Vagina (tissue), 2 donors: ENCODE measurements at regions of chr5 and their contacts with region 1.

Region 1: GRCh38 chr5:54944364-54944763 is 41.0 kb downstream of the ESM1 start:
- DNase-seq: no peak
- H3K4me3 ChIP-seq: no peak overlapping the region
- H3K27ac ChIP-seq: no peak overlapping the region
- H3K4me1 ChIP-seq: no peaks in the 10 kb centered on the region
- H3K27me3 ChIP-seq: no peaks in the 10 kb centered on the region
- CTCF ChIP-seq: peak in 1 of 3 experiments; percentile 12
- POLR2A ChIP-seq: no peak

Region 2: GRCh38 chr5:55102348-55102747 is 158.0 kb after region 1 on chr5 and contains the start of gene GZMA:
- intact Hi-C with region 1: no loop called
- DNase-seq: no peak
- H3K4me3 ChIP-seq: no peak within 1 kb of the TSS
- H3K27ac ChIP-seq: no peak within 1 kb of the TSS
- H3K4me1 ChIP-seq: no peaks in the 10 kb centered on the region
- H3K27me3 ChIP-seq: no peaks in the 10 kb centered on the region
- CTCF ChIP-seq: no peak
- POLR2A ChIP-seq: no peak
- total RNA-seq, gene GZMA: 1.2 TPM

Region 3: GRCh38 chr5:55159763-55160492 is 215.6 kb after region 1 on chr5 and contains the start of gene GPX8:
- intact Hi-C with region 1: loop called (anchors 10 kb)
- DNase-seq: no peak
- H3K4me3 ChIP-seq: peak within 1 kb of the TSS; percentile 43 to 45
- H3K27ac ChIP-seq: peak within 1 kb of the TSS; percentile 76
- H3K4me1 ChIP-seq: peaks cover 7% of the 10 kb centered on the region
- H3K27me3 ChIP-seq: no peaks in the 10 kb centered on the region
- CTCF ChIP-seq: peak in 2 of 3 experiments; percentile 41 to 80
- POLR2A ChIP-seq: no peak
- total RNA-seq, gene GPX8: 22.1 TPM